ENCODE measurements at regions of chr16 and their contacts with region 1.

Region 1: DNA sequence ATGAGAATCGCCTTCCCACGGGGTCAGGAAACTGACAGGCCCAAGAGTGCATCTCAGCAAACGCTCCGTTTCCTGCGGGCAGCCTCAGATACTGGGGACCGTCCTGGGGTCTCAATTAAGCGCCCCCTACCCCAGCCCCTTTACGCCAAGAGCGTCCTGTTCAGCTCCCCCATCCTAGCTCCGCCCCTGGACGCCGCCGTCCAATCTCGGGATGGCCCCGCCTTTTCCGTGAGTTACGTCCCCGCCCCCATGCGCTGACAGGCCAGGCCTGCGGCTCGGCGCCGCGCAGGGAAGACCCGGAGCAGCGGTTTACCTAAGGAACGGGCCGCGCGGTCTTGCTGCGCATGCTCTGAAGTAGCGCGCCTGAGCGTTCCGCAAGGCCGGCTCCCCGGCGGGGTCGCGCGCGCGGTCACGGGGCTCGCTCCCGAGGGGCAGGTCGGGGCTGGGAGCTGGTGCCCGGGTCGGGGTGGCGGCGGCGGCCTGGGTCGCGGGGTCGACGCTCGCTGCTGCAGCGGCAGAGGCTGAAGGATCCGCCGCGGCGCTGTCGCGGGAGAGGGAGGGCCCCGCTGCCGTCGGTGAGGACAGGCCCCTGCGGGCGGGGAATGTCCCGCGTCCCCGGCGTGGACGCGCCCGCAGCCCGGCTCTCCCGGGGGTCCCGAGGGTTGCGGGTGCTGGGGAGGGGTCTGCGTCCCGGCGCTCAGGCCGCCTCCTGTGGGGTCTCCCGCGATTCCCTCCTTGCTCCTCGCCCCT is at the start of gene FLYWCH1:
- DNase-seq: peak; percentile 96
- H3K4me3 ChIP-seq: peak within 1 kb of the TSS; percentile 56 to 84 (median 71)
- H3K27ac ChIP-seq: peak within 1 kb of the TSS; percentile 13
- H3K4me1 ChIP-seq: peaks cover 24% of the 10 kb centered on the region
- H3K27me3 ChIP-seq: no peaks in the 10 kb centered on the region
- CTCF ChIP-seq: no peak
- total RNA-seq, gene FLYWCH1: 53.2 to 56.1 TPM

Region 2: GRCh38 chr16:2656985-2657384 is 254.8 kb before region 1 on chr16:
- CTCF ChIA-PET with region 1: no interaction called
- dilution Hi-C with region 1: no loop called
- in situ Hi-C with region 1: no loop called
- intact Hi-C with region 1: no loop called
- DNase-seq: no peak
- H3K4me3 ChIP-seq: no peak overlapping the region
- H3K27ac ChIP-seq: no peak overlapping the region
- H3K4me1 ChIP-seq: no peaks in the 10 kb centered on the region
- H3K27me3 ChIP-seq: no peaks in the 10 kb centered on the region
- CTCF ChIP-seq: no peak

Region 3: GRCh38 chr16:2770057-2770951 is 141.5 kb before region 1 on chr16:
- CTCF ChIA-PET with region 1: no interaction called
- dilution Hi-C with region 1: loop called (anchors 5 kb)
- in situ Hi-C with region 1: no loop called
- intact Hi-C with region 1: no loop called
- DNase-seq: no peak
- H3K4me3 ChIP-seq: no peak overlapping the region
- H3K27ac ChIP-seq: peak overlapping the region; percentile 2
- H3K4me1 ChIP-seq: peaks cover 45% of the 10 kb centered on the region
- H3K27me3 ChIP-seq: no peaks in the 10 kb centered on the region
- CTCF ChIP-seq: peak in 1 of 2 donors; percentile 8

Measured in mammary epithelial cell (primary cell).